GM10248 (cell line): ENCODE measurements at regions of chr3 and their contacts with region 1.

Region 1: DNA sequence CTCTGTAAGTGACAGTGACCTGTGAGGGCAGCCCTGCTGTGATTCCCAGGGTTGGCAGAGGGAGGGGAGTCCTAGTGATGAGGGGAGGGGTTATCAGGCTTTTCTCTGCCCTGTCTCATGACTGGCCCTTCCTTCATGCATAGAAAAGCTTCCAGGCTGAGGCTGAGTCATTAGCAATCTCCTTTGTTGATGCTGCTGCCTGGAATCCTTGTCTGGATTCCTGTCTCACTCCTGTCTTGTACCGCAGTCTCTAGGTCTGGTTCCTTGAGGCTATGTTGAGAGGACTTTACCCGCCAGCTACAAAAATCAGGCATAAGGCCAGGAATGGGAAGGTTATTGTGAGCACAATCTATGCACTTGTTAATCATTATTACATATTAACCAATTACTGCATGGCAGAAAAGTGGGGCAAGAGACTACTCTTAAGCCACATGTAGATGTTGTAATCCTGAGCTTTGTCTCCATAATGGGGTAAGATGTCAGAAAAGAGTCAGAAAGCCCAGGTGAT is 7.2 kb downstream of the KLHL6 start:
- DNase-seq: no peak
- CTCF ChIP-seq: no peak

Region 2: GRCh38 chr3:183527428-183528379 is 20.6 kb before region 1 on chr3:
- CTCF ChIA-PET with region 1: interaction called, 12 read pairs
- POLR2A ChIA-PET with region 1: no interaction called
- DNase-seq: peak; percentile 73
- CTCF ChIP-seq: no peak

Region 3: GRCh38 chr3:183537295-183537730 is 11.0 kb before region 1 on chr3:
- CTCF ChIA-PET with region 1: interaction called, 23 read pairs
- POLR2A ChIA-PET with region 1: interaction called, 4 read pairs
- DNase-seq: no peak
- CTCF ChIP-seq: no peak